GM18951 (cell line): ENCODE measurements at regions of chr4 and their contacts with region 1.

Region 1: GRCh38 chr4:83516042-83516772 is 19.7 kb upstream of the GPAT3 start:
- POLR2A ChIP-seq: no peak

Region 2: DNA sequence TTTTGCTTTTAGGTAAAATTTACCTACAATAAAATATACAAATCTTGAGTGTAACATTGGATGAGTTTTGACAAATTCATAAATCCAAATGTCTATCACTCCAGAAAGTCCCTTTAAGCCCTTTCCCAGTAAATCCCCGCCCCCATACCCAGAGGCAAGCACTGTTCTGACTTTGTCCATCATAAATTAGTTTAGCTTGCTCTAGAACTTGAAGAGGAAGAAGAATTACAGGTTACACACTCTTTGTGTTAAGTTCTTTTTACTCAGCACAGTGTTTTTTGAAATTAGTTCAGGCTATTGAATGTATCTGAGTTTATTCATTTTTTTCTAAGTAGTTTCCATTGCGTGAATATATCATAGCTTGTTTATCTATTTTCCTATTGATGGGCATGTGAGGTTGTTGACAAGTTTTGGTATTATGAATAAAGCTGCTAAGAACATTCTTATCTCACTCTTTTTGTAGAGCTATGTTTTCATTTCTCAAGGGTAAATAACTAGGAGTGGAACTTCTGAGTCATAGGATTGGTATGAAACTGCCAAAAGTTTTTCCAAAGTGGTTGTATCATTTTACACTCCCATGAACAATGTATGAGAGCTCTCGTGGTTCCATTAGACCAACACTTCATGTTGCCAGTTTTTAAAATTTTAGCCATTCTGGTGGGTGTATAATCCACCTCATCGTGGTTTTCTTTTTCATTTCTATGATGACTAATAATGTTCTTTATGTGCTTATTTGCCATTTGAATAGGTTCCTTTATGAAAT is 159.1 kb before region 1 on chr4:
- in situ Hi-C with region 1: no loop called
- POLR2A ChIP-seq: no peak

Region 3: GRCh38 chr4:83639849-83640493 is 123.8 kb after region 1 on chr4:
- in situ Hi-C with region 1: loop called (anchors 10 kb)
- POLR2A ChIP-seq: no peak

Region 4: GRCh38 chr4:84503495-84504437 is 987.6 kb after region 1 on chr4:
- in situ Hi-C with region 1: loop called (anchors 25 kb)
- POLR2A ChIP-seq: no peak